Panc1 (cell line): ENCODE measurements at regions of chr1 and their contacts with region 1.

Region 1: GRCh38 chr1:116680752-116681151 is 13.2 kb upstream of the IGSF3 start:
- DNase-seq: no peak
- ATAC-seq: no peak
- H3K4me3 ChIP-seq: no peak overlapping the region
- H3K27ac ChIP-seq: no peak overlapping the region
- H3K4me1 ChIP-seq: no peaks in the 10 kb centered on the region
- H3K27me3 ChIP-seq: no peaks in the 10 kb centered on the region
- CTCF ChIP-seq: no peak

Region 2: GRCh38 chr1:116128664-116129063 is 552.1 kb before region 1 on chr1:
- CTCF ChIA-PET with region 1: no interaction called
- POLR2A ChIA-PET with region 1: no interaction called
- in situ Hi-C with region 1: no loop called
- intact Hi-C with region 1: loop called (anchors 5 kb)
- DNase-seq: no peak
- ATAC-seq: no peak
- H3K4me3 ChIP-seq: no peak overlapping the region
- H3K27ac ChIP-seq: no peak overlapping the region
- H3K4me1 ChIP-seq: no peaks in the 10 kb centered on the region
- H3K27me3 ChIP-seq: no peaks in the 10 kb centered on the region
- CTCF ChIP-seq: no peak

Region 3: GRCh38 chr1:116943438-116943837 is 262.7 kb after region 1 on chr1:
- CTCF ChIA-PET with region 1: no interaction called
- POLR2A ChIA-PET with region 1: no interaction called
- in situ Hi-C with region 1: no loop called
- intact Hi-C with region 1: no loop called
- DNase-seq: no peak
- ATAC-seq: no peak
- H3K4me3 ChIP-seq: no peak overlapping the region
- H3K27ac ChIP-seq: no peak overlapping the region
- H3K4me1 ChIP-seq: no peaks in the 10 kb centered on the region
- H3K27me3 ChIP-seq: no peaks in the 10 kb centered on the region
- CTCF ChIP-seq: no peak